Dendritic cell treated with granulocyte-macrophage colony-stimulating factor and Interleukin-4, amounts not matched to agents 40 ng/mL and 50 ng/mL, for 4 days (primary cell): ENCODE measurements at regions of chr10 and their contacts with region 1.

Region 1: DNA sequence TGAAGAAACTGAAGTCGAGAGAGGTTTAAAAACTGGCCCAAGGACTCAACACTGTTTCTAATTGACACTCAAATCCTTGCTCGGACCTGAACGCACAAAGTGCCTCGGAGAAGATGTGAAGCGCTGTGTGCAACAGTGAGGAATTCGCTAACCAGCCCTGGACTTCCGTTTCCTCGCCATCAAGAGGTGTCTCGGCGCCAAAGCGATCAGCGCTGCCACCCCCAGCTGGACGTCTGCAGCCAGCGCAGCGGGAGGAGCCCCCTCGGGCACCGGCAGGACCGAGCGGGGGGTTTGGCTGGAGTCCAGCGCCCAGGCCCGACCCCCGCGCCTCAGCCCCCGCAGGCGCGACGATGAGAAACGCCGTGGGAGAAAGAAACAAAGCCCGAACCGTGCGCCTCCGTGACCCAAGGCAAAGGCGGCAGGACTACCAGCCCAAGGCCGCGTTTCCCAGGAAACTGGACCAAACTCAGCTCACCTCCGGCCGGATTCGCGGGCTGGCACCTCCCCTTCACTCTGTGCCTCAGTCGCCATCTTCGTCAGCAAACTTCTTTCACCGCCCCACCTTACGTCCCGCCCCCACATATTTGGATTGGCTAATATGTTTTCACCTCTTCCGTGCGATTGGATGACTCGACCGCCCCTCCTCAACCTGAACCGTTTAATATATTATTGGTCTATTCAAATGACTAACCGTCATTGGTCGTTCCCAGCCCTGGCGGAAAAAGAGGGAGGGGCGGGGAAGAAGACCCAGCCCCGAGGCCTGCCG is at the start of gene ARHGAP19:
- H3K4me3 Mint-ChIP-seq: peak within 1 kb of the TSS; percentile 84
- H3K27ac Mint-ChIP-seq: peak within 1 kb of the TSS; percentile 86
- H3K4me1 Mint-ChIP-seq: peaks cover 26% of the 10 kb centered on the region
- H3K27me3 Mint-ChIP-seq: no peaks in the 10 kb centered on the region

Region 2: GRCh38 chr10:97318772-97319651 is 26.7 kb after region 1 on chr10 and contains the start of gene FRAT1:
- intact Hi-C with region 1: loop called (anchors 1 kb)
- H3K4me3 Mint-ChIP-seq: peak within 1 kb of the TSS; percentile 93
- H3K27ac Mint-ChIP-seq: peak within 1 kb of the TSS; percentile 99
- H3K4me1 Mint-ChIP-seq: peaks cover 71% of the 10 kb centered on the region
- H3K27me3 Mint-ChIP-seq: no peaks in the 10 kb centered on the region